Naive thymus-derived CD4-positive, alpha-beta T cell (primary cell): ENCODE measurements at regions of chr4 and their contacts with region 1.

Region 1: GRCh38 chr4:70901984-70902576 is at the start of gene MOB1B:
- DNase-seq: peak; percentile 59 to 89 (median 84)
- ATAC-seq: peak; percentile 98
- H3K4me3 ChIP-seq: peak within 1 kb of the TSS; percentile 87
- H3K4me3 Mint-ChIP-seq: peak within 1 kb of the TSS; percentile 94 to 100 (median 98)
- H3K27ac ChIP-seq: peak within 1 kb of the TSS; percentile 78
- H3K27ac Mint-ChIP-seq: peak within 1 kb of the TSS; percentile 86 to 96 (median 89)
- H3K4me1 ChIP-seq: peaks cover 6 to 14% of the 10 kb centered on the region in 2 donors
- H3K4me1 Mint-ChIP-seq: peaks cover 23 to 46% (median 40%) of the 10 kb centered on the region in 7 donors
- H3K27me3 ChIP-seq: no peaks in the 10 kb centered on the region
- H3K27me3 Mint-ChIP-seq: peaks cover 0 to 2% (median 0%) of the 10 kb centered on the region in 5 donors
- total RNA-seq, gene MOB1B: 12.0 to 20.3 (median 13.5) TPM

Region 2: DNA sequence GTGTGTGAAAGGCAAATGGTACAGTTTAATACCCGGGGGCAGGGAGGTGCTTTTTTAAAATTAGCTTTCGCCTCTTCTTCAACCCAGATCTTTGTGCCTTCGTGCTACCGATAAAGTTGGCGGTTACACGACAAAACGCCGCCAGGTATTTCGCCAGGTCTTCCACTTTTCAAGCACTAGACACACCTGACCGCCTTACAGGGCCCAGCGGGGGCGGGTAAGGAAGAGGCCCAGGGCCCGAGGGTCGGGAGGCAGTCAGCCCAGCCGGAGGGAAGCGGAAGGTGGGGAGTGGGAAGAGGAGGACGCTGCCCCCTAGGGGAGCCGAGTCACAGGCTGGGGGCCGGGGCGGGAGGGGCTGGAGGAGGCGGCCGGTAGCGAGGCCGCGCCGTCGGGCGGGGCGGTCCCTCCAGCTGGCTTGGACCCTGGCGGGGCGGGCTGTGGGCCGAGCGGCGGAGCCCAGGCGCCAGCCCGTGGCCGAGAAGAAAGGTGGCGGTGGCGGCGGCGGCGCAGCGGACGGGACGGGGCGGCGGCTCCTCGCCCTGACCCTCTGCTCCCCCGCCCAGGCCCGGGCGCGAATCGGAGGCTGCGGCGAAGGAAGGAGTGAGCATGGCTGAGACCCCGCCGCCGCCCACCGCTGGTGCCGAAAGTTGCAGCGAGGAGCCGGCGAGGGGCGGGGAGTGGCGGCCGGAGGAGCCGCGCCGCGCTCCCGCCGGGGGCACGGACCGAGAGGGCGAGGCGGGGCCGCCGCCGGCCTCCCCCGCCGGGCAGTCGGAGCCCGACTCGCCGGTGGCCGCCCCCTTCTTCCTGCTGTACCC is 197.5 kb before region 1 on chr4:
- CTCF ChIA-PET with region 1: no interaction called
- POLR2A ChIA-PET with region 1: interaction called, 7 read pairs
- intact Hi-C with region 1: loop called (anchors 1 kb)
- DNase-seq: peak; percentile 30 to 63 (median 44)
- ATAC-seq: peak; percentile 67
- H3K4me3 ChIP-seq: peak overlapping the region; percentile 87
- H3K4me3 Mint-ChIP-seq: peak overlapping the region; percentile 82 to 95 (median 93)
- H3K27ac ChIP-seq: peak overlapping the region; percentile 88
- H3K27ac Mint-ChIP-seq: peak overlapping the region; percentile 74 to 98 (median 93)
- H3K4me1 ChIP-seq: peaks cover 12 to 18% of the 10 kb centered on the region in 2 donors
- H3K4me1 Mint-ChIP-seq: peaks cover 17 to 43% (median 33%) of the 10 kb centered on the region in 7 donors
- H3K27me3 ChIP-seq: no peaks in the 10 kb centered on the region
- H3K27me3 Mint-ChIP-seq: no peaks in the 10 kb centered on the region

Region 3: GRCh38 chr4:70927502-70928137 is 25.5 kb after region 1 on chr4:
- CTCF ChIA-PET with region 1: no interaction called
- POLR2A ChIA-PET with region 1: no interaction called
- intact Hi-C with region 1: loop called (anchors 1 to 2 kb)
- DNase-seq: peak in 7 of 9 donors; percentile 27 to 59 (median 36)
- ATAC-seq: peak; percentile 68
- H3K4me3 ChIP-seq: no peak overlapping the region
- H3K4me3 Mint-ChIP-seq: peak overlapping the region; percentile 4 to 66 (median 54)
- H3K27ac ChIP-seq: no peak overlapping the region
- H3K27ac Mint-ChIP-seq: peak overlapping the region; percentile 16 to 85 (median 60)
- H3K4me1 ChIP-seq: peaks cover 0 to 13% of the 10 kb centered on the region in 2 donors
- H3K4me1 Mint-ChIP-seq: peaks cover 21 to 55% (median 53%) of the 10 kb centered on the region in 7 donors
- H3K27me3 ChIP-seq: no peaks in the 10 kb centered on the region
- H3K27me3 Mint-ChIP-seq: no peaks in the 10 kb centered on the region

Region 4: GRCh38 chr4:70993181-70994068 is 91.3 kb after region 1 on chr4 and contains the start of gene DCK:
- CTCF ChIA-PET with region 1: interaction called, 3 read pairs
- POLR2A ChIA-PET with region 1: interaction called, 3 read pairs
- intact Hi-C with region 1: loop called (anchors 1 kb)
- DNase-seq: peak; percentile 77 to 93 (median 80)
- ATAC-seq: peak; percentile 96
- H3K4me3 ChIP-seq: peak within 1 kb of the TSS; percentile 86
- H3K4me3 Mint-ChIP-seq: peak within 1 kb of the TSS; percentile 86 to 98 (median 94)
- H3K27ac ChIP-seq: peak within 1 kb of the TSS; percentile 79
- H3K27ac Mint-ChIP-seq: peak within 1 kb of the TSS; percentile 84 to 97 (median 94)
- H3K4me1 ChIP-seq: peaks cover 19 to 26% of the 10 kb centered on the region in 2 donors
- H3K4me1 Mint-ChIP-seq: peaks cover 31 to 56% (median 45%) of the 10 kb centered on the region in 7 donors
- H3K27me3 ChIP-seq: no peaks in the 10 kb centered on the region
- H3K27me3 Mint-ChIP-seq: no peaks in the 10 kb centered on the region
- total RNA-seq, gene DCK: 19.8 to 72.8 (median 47.7) TPM

Region 5: GRCh38 chr4:71009890-71010588 is 108.0 kb after region 1 on chr4:
- CTCF ChIA-PET with region 1: interaction called, 4 read pairs
- POLR2A ChIA-PET with region 1: no interaction called
- intact Hi-C with region 1: loop called (anchors 1 kb)
- DNase-seq: peak in 6 of 9 donors; percentile 23 to 54 (median 48)
- ATAC-seq: peak; percentile 83
- H3K4me3 ChIP-seq: no peak overlapping the region
- H3K4me3 Mint-ChIP-seq: peak overlapping the region in 3 of 10 donors; percentile 5 to 44 (median 29)
- H3K27ac ChIP-seq: no peak overlapping the region
- H3K27ac Mint-ChIP-seq: peak overlapping the region in 8 of 9 donors; percentile 26 to 65 (median 48)
- H3K4me1 ChIP-seq: peaks cover 9 to 10% of the 10 kb centered on the region in 2 donors
- H3K4me1 Mint-ChIP-seq: peaks cover 23 to 52% (median 48%) of the 10 kb centered on the region in 7 donors
- H3K27me3 ChIP-seq: no peaks in the 10 kb centered on the region
- H3K27me3 Mint-ChIP-seq: no peaks in the 10 kb centered on the region

Region 6: GRCh38 chr4:71807469-71807868 is 905.4 kb after region 1 on chr4:
- CTCF ChIA-PET with region 1: no interaction called
- POLR2A ChIA-PET with region 1: no interaction called
- intact Hi-C with region 1: no loop called
- DNase-seq: no peak
- ATAC-seq: no peak
- H3K4me3 ChIP-seq: no peak overlapping the region
- H3K4me3 Mint-ChIP-seq: no peak overlapping the region
- H3K27ac ChIP-seq: no peak overlapping the region
- H3K27ac Mint-ChIP-seq: no peak overlapping the region
- H3K4me1 ChIP-seq: no peaks in the 10 kb centered on the region
- H3K4me1 Mint-ChIP-seq: no peaks in the 10 kb centered on the region
- H3K27me3 ChIP-seq: no peaks in the 10 kb centered on the region
- H3K27me3 Mint-ChIP-seq: no peaks in the 10 kb centered on the region